GM12878 (cell line): ENCODE measurements at regions of chr18 and their contacts with region 1.

Region 1: DNA sequence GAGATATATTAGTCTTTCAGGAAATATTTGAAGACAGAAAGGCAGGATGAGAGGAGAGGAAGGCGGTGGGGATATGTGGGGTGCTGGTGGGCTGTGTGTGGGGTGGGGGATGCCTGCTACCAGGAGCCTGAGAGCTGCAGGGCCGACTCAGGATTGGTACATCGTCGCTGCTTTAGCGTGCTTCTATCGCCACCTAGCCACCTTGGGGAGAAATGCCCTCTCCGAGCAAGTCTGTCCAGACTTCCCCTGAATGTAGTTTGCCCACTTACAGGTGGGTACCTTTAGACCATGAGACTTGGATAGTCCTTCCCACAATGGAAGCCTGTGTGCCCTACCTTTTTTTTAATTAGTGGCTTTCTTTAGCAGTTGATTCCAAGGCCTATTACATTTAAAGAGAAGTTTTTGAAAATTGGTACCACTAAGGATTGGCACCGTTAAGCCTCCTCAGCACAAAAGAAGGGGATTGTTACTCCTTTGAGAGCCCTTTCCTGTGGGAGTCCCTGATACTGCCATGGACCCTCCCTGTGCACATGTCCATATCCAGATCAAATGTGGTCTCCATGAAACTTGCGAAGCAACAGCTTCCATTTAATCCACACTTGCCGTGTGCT is 114.1 kb upstream of the NDUFV2 start:
- DNase-seq: no peak
- ATAC-seq: peak; percentile 98
- H3K4me3 ChIP-seq: no peak overlapping the region
- H3K27ac ChIP-seq: no peak overlapping the region
- H3K4me1 ChIP-seq: peaks cover 3% of the 10 kb centered on the region
- H3K27me3 ChIP-seq: no peaks in the 10 kb centered on the region
- CTCF ChIP-seq: peak; percentile 89 to 91 (median 91); a peak in 5 of 6 replicates
- EP300 ChIP-seq: no peak
- POLR2A ChIP-seq: no peak
- RAD21 ChIP-seq: peak; percentile 91

Region 2: GRCh38 chr18:8478166-8478967 is 510.0 kb before region 1 on chr18:
- CTCF ChIA-PET with region 1: interaction called, 13 read pairs
- POLR2A ChIA-PET with region 1: no interaction called
- RAD21 ChIA-PET with region 1: interaction called, 3 read pairs
- SMC1A ChIA-PET with region 1: interaction called, 6 read pairs
- in situ Hi-C with region 1: loop called (anchors 25 kb)
- intact Hi-C with region 1: loop called (anchors 2 kb)
- DNase-seq: no peak
- ATAC-seq: peak; percentile 98
- H3K4me3 ChIP-seq: no peak overlapping the region
- H3K27ac ChIP-seq: no peak overlapping the region
- H3K4me1 ChIP-seq: no peaks in the 10 kb centered on the region
- H3K27me3 ChIP-seq: no peaks in the 10 kb centered on the region; a peak in 2 of 4 replicates
- CTCF ChIP-seq: peak; percentile 82 to 97 (median 94)
- EP300 ChIP-seq: no peak
- POLR2A ChIP-seq: no peak
- RAD21 ChIP-seq: peak; percentile 75

Region 3: GRCh38 chr18:8571399-8571798 is 417.0 kb before region 1 on chr18:
- CTCF ChIA-PET with region 1: no interaction called
- POLR2A ChIA-PET with region 1: no interaction called
- RAD21 ChIA-PET with region 1: no interaction called
- SMC1A ChIA-PET with region 1: no interaction called
- in situ Hi-C with region 1: no loop called
- intact Hi-C with region 1: no loop called
- DNase-seq: no peak
- ATAC-seq: no peak
- H3K4me3 ChIP-seq: no peak overlapping the region
- H3K27ac ChIP-seq: no peak overlapping the region
- H3K4me1 ChIP-seq: no peaks in the 10 kb centered on the region
- H3K27me3 ChIP-seq: no peaks in the 10 kb centered on the region
- CTCF ChIP-seq: no peak
- EP300 ChIP-seq: no peak
- POLR2A ChIP-seq: no peak
- RAD21 ChIP-seq: no peak

Region 4: GRCh38 chr18:8661754-8662569 is 326.4 kb before region 1 on chr18:
- CTCF ChIA-PET with region 1: interaction called, 62 read pairs
- POLR2A ChIA-PET with region 1: interaction called, 4 read pairs
- RAD21 ChIA-PET with region 1: interaction called, 5 read pairs
- SMC1A ChIA-PET with region 1: interaction called, 9 read pairs
- in situ Hi-C with region 1: loop called (anchors 5 kb)
- intact Hi-C with region 1: no loop called
- DNase-seq: no peak
- ATAC-seq: peak; percentile 61
- H3K4me3 ChIP-seq: no peak overlapping the region
- H3K27ac ChIP-seq: no peak overlapping the region
- H3K4me1 ChIP-seq: no peaks in the 10 kb centered on the region
- H3K27me3 ChIP-seq: no peaks in the 10 kb centered on the region; a peak in 1 of 4 replicates
- CTCF ChIP-seq: no peak
- EP300 ChIP-seq: no peak
- POLR2A ChIP-seq: no peak
- RAD21 ChIP-seq: no peak

Region 5: GRCh38 chr18:8704361-8705279 is 283.7 kb before region 1 on chr18:
- CTCF ChIA-PET with region 1: interaction called, 3 read pairs
- POLR2A ChIA-PET with region 1: no interaction called
- RAD21 ChIA-PET with region 1: interaction called, 3 read pairs
- SMC1A ChIA-PET with region 1: no interaction called
- in situ Hi-C with region 1: loop called (anchors 5 kb)
- intact Hi-C with region 1: no loop called
- DNase-seq: no peak
- ATAC-seq: peak; percentile 97
- H3K4me3 ChIP-seq: peak overlapping the region; percentile 92
- H3K27ac ChIP-seq: no peak overlapping the region
- H3K4me1 ChIP-seq: peaks cover 7% of the 10 kb centered on the region
- H3K27me3 ChIP-seq: peaks cover 19 to 37% of the 10 kb centered on the region in 2 experiments
- CTCF ChIP-seq: no peak
- EP300 ChIP-seq: no peak
- POLR2A ChIP-seq: no peak
- RAD21 ChIP-seq: no peak

Region 6: GRCh38 chr18:9055185-9055584 is 66.8 kb after region 1 on chr18:
- CTCF ChIA-PET with region 1: interaction called, 5 read pairs
- POLR2A ChIA-PET with region 1: no interaction called
- RAD21 ChIA-PET with region 1: interaction called, 3 read pairs
- SMC1A ChIA-PET with region 1: interaction called, 5 read pairs
- in situ Hi-C with region 1: no loop called
- intact Hi-C with region 1: loop called (anchors 2 kb)
- DNase-seq: no peak
- ATAC-seq: peak; percentile 89
- H3K4me3 ChIP-seq: no peak overlapping the region
- H3K27ac ChIP-seq: no peak overlapping the region
- H3K4me1 ChIP-seq: peaks cover 2% of the 10 kb centered on the region; the same call in 1 of the 2 replicates
- H3K27me3 ChIP-seq: no peaks in the 10 kb centered on the region
- CTCF ChIP-seq: peak in 2 of 3 experiments; percentile 18 to 43; a peak in 1 of 6 replicates
- EP300 ChIP-seq: no peak
- POLR2A ChIP-seq: no peak
- RAD21 ChIP-seq: peak; percentile 40